ENCODE measurements at regions of chr15 and their contacts with region 1.

Region 1: DNA sequence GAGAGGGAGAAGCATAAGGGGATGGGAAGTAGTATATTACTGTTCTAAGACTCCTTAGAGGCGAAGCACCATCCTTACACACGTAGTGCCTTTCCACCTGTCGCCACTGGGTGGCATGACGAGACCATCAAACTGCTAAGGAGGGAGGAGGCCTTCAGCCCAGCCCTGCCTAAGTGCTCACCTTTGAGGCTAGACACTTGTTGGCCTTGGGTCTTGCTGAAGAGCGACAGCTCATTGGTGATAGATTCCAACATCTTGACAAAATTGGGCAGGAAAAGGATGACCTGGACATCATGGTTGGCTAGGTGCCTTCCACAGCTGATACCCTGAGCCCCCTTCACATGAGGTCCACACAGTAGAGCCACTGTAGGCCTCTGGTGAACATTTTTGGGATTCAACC is 19.6 kb downstream of the CLK3 start:
- DNase-seq: peak; percentile 70 to 81 (median 76)
- H3K4me3 ChIP-seq: no peak overlapping the region
- H3K27ac ChIP-seq: no peak overlapping the region
- H3K4me1 ChIP-seq: no peaks in the 10 kb centered on the region
- H3K27me3 ChIP-seq: no peaks in the 10 kb centered on the region

Region 2: GRCh38 chr15:74373731-74374647 is 261.2 kb before region 1 on chr15:
- CTCF ChIA-PET with region 1: interaction called, 120 read pairs
- POLR2A ChIA-PET with region 1: interaction called, 3 read pairs
- DNase-seq: peak; percentile 87 to 95 (median 94)
- H3K4me3 ChIP-seq: peak overlapping the region; percentile 27 to 83 (median 66)
- H3K27ac ChIP-seq: no peak overlapping the region
- H3K4me1 ChIP-seq: peaks cover 2 to 31% (median 28%) of the 10 kb centered on the region in 4 experiments
- H3K27me3 ChIP-seq: peaks cover 0 to 3% (median 0%) of the 10 kb centered on the region in 5 experiments

Region 3: GRCh38 chr15:74573987-74574386 is 61.2 kb before region 1 on chr15:
- CTCF ChIA-PET with region 1: no interaction called
- POLR2A ChIA-PET with region 1: no interaction called
- DNase-seq: no peak
- H3K4me3 ChIP-seq: no peak overlapping the region
- H3K27ac ChIP-seq: no peak overlapping the region
- H3K4me1 ChIP-seq: no peaks in the 10 kb centered on the region
- H3K27me3 ChIP-seq: no peaks in the 10 kb centered on the region

Region 4: DNA sequence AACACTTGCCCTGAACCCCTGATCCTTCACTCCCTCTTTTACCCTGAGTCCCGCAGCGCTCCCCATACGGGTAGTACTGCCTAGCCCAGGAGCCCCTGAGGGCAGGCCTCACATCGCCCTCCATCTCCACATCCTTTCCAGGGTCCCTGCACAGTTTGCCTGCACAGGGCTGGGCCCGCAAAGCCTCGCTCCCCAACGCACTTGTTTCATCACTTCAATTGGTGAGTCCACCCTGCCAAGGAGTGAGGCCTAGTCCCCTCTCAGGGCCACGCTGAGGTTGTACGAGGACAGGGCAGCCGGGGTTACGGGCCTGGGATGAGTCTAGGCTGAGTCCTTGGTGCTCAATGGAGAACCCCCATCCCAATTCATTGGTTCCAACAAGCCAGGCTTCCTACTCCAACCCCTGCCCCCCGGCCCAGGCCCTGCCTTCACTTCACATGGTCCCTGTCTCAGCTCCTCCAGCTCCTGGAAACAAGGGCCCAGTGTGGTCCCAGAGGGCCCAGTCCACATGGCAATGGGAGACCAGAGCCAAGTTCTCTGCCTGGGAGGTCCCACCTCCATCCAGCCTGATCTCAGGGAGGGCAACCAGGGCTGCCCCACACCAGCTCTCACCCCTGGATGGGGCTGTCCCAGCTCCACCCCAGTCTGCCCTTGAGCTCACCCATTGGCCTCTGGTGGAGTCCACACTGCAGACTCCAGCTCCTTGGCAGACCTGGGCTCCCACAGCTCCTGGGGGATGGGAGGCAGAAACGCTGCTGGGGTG is 32.0 kb before region 1 on chr15:
- CTCF ChIA-PET with region 1: no interaction called
- POLR2A ChIA-PET with region 1: no interaction called
- DNase-seq: no peak
- H3K4me3 ChIP-seq: no peak overlapping the region
- H3K27ac ChIP-seq: no peak overlapping the region
- H3K4me1 ChIP-seq: peaks cover 2 to 18% (median 9%) of the 10 kb centered on the region in 4 experiments
- H3K27me3 ChIP-seq: no peaks in the 10 kb centered on the region

Region 5: GRCh38 chr15:74615508-74616365 is 19.5 kb before region 1 on chr15 and contains the start of gene CLK3:
- CTCF ChIA-PET with region 1: interaction called, 302 read pairs
- POLR2A ChIA-PET with region 1: interaction called, 4 read pairs
- DNase-seq: peak; percentile 96 to 97 (median 97)
- H3K4me3 ChIP-seq: peak within 1 kb of the TSS; percentile 62 to 98 (median 95)
- H3K27ac ChIP-seq: peak within 1 kb of the TSS; percentile 97 to 99
- H3K4me1 ChIP-seq: peaks cover 8 to 38% (median 30%) of the 10 kb centered on the region in 4 experiments
- H3K27me3 ChIP-seq: no peaks in the 10 kb centered on the region

Region 6: GRCh38 chr15:74695597-74696397 is 60.6 kb after region 1 on chr15 and contains the start of gene EDC3:
- CTCF ChIA-PET with region 1: interaction called, 10 read pairs
- POLR2A ChIA-PET with region 1: no interaction called
- DNase-seq: peak; percentile 92 to 95 (median 94)
- H3K4me3 ChIP-seq: peak within 1 kb of the TSS; percentile 93 to 99 (median 97)
- H3K27ac ChIP-seq: peak within 1 kb of the TSS; percentile 92 to 98
- H3K4me1 ChIP-seq: peaks cover 9 to 23% (median 17%) of the 10 kb centered on the region in 4 experiments
- H3K27me3 ChIP-seq: no peaks in the 10 kb centered on the region

Region 7: DNA sequence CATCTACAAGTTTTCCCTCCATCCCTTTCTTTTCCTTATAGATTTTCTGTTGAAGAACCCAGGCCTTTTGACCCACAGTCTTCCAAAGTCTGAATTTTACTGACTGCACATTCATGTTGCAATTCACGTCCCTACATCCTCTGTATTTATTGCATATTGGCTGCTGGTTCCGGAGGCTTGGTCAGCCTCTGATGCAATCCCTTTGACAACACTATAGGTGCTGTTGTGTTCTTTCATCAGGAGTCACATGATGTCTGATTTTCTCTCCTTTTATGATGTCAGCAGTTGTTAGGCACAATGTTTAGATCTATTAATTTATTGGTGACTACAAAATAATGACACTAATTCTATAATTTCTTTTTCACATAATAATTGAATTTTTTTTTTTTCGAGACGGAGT is 81.4 kb after region 1 on chr15:
- CTCF ChIA-PET with region 1: no interaction called
- POLR2A ChIA-PET with region 1: no interaction called
- DNase-seq: no peak
- H3K4me3 ChIP-seq: no peak overlapping the region
- H3K27ac ChIP-seq: no peak overlapping the region
- H3K4me1 ChIP-seq: no peaks in the 10 kb centered on the region
- H3K27me3 ChIP-seq: peaks cover 0 to 2% (median 0%) of the 10 kb centered on the region in 5 experiments

Region 8: GRCh38 chr15:74799856-74800547 is 164.8 kb after region 1 on chr15:
- CTCF ChIA-PET with region 1: interaction called, 136 read pairs
- POLR2A ChIA-PET with region 1: no interaction called
- DNase-seq: peak; percentile 83 to 90 (median 86)
- H3K4me3 ChIP-seq: no peak overlapping the region
- H3K27ac ChIP-seq: peak overlapping the region; percentile 33 to 56
- H3K4me1 ChIP-seq: peaks cover 11 to 47% (median 43%) of the 10 kb centered on the region in 4 experiments
- H3K27me3 ChIP-seq: no peaks in the 10 kb centered on the region

Measured in common myeloid progenitor, CD34-positive (primary cell).